GM23248 (cell line): ENCODE measurements at regions of chr10 and their contacts with region 1.

Region 1: GRCh38 chr10:103681617-103682399 is 173.6 kb downstream of the SH3PXD2A start:
- DNase-seq: peak; percentile 73
- H3K4me3 ChIP-seq: no peak overlapping the region
- H3K27ac ChIP-seq: peak overlapping the region; percentile 70
- H3K4me1 ChIP-seq: peaks cover 47% of the 10 kb centered on the region
- H3K27me3 ChIP-seq: no peaks in the 10 kb centered on the region

Region 2: GRCh38 chr10:103602028-103602851 is 79.6 kb before region 1 on chr10:
- in situ Hi-C with region 1: loop called (anchors 5 kb)
- DNase-seq: no peak
- H3K4me3 ChIP-seq: no peak overlapping the region
- H3K27ac ChIP-seq: no peak overlapping the region
- H3K4me1 ChIP-seq: peaks cover 8% of the 10 kb centered on the region; the same call in 1 of the 2 replicates
- H3K27me3 ChIP-seq: no peaks in the 10 kb centered on the region

Region 3: DNA sequence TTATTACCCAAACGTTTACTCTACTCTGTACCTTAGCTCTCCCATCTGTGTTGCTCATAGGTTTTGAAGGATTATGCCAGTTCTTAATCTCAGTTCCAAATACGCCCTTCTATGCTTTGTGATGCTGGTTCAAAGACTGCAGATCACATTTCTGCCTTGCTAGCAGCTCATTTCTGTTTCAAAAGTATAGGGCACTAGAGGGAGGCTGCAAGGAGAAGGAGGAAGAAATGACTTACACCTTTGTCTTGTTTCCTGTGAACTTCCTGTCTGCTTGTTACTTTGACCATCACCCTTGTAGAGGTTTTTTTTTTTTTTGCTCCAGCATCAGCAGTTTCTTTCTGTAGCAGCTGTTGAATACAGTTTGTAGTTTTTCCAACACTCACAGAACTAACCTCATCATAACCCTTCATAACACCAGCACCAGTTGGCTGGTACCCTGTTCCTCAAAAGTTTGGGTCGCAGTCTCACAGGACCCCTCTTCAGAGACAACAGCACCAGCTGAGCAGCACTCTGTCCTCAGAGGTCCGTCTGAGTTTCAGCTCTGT is 301.6 kb after region 1 on chr10:
- in situ Hi-C with region 1: no loop called
- DNase-seq: peak; percentile 10
- H3K4me3 ChIP-seq: no peak overlapping the region
- H3K27ac ChIP-seq: peak overlapping the region; percentile 10; the same call in 1 of the 2 replicates
- H3K4me1 ChIP-seq: peaks cover 28% of the 10 kb centered on the region
- H3K27me3 ChIP-seq: no peaks in the 10 kb centered on the region